ENCODE measurements at regions of chr3 and their contacts with region 1.

Region 1: GRCh38 chr3:181210275-181210674 is 220.7 kb upstream of the DNAJC19 start:
- DNase-seq: peak; percentile 42
- H3K4me3 Mint-ChIP-seq: no peak overlapping the region
- H3K27ac Mint-ChIP-seq: no peak overlapping the region
- H3K4me1 Mint-ChIP-seq: no peaks in the 10 kb centered on the region
- H3K27me3 Mint-ChIP-seq: no peaks in the 10 kb centered on the region
- CTCF ChIP-seq: peak; percentile 55

Region 2: DNA sequence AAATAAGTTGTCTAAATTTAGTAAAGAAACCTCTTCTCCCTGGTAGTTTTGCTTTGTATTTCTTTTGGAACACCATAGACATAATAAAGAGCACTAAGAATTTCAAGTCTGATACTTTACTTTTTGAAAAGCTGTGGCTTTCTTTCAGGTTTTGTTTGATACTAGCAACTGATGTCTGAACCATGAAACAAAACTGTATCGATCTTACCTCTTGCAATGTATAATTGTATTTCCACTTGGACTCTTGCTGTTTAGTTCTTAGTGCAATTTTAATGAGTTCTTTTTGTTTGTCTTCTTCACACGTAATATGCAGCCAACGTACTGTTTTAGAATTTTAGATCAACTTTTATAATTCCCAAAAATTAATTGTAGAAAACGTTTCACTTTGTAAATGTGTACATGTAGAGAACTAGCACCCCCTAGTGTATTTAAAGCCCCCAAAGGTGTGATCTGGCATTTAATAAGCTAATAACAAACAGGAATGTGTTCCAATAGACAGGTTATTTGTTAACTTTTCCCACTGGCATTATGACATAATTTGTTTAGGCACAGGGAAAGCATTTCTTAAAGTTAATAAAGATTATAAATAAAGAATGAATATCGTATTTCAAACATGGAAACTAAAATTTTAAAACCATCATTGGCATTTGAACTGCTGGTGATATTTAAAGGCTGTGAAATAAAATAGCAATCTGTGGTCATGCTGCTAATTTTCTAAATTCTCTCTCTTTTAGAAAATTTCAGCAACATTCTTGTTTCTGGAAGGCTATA is 68.4 kb after region 1 on chr3:
- CTCF ChIA-PET with region 1: interaction called, 6 read pairs
- POLR2A ChIA-PET with region 1: no interaction called
- intact Hi-C with region 1: loop called (anchors 2 kb)
- DNase-seq: peak; percentile 13
- H3K4me3 Mint-ChIP-seq: no peak overlapping the region
- H3K27ac Mint-ChIP-seq: no peak overlapping the region
- H3K4me1 Mint-ChIP-seq: no peaks in the 10 kb centered on the region
- H3K27me3 Mint-ChIP-seq: peaks cover 56% of the 10 kb centered on the region
- CTCF ChIP-seq: no peak

Region 3: DNA sequence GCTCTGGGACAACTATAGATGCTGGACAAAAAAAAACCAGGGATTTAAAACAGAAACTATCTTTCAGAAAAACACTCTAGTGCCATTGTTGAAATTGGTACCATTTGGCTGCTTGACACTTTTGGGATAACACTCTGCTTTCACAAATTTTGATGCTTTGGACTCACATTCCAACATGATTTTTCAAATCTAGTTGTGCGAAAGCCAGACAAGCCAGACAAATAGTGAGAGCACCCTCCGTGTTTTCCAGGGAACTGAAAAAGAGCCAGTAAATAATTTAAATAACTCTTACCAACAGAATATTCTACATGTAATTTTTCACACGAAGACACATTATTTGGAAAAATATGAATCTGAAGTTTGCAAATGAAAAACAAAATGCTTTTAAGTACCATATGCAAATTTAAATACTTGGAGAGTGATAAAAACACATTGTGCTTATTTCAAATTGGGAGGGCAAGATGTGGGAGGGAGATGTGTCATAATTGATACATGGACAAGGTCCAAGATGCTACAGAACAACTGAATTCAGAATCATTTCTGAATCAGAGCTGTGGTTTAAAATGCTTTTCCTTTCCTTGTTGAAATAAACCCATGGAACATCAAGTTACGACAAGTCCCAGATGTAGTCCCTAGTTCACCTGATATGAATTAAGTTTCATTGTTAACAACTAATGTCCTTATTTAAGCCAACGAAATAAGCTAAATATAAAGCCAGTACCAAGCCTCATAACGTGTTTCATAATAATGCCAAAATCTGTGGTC is 357.2 kb after region 1 on chr3:
- CTCF ChIA-PET with region 1: no interaction called
- POLR2A ChIA-PET with region 1: no interaction called
- intact Hi-C with region 1: loop called (anchors 10 kb)
- DNase-seq: peak; percentile 49
- H3K4me3 Mint-ChIP-seq: no peak overlapping the region
- H3K27ac Mint-ChIP-seq: peak overlapping the region; percentile 12
- H3K4me1 Mint-ChIP-seq: peaks cover 15% of the 10 kb centered on the region
- H3K27me3 Mint-ChIP-seq: no peaks in the 10 kb centered on the region
- CTCF ChIP-seq: no peak

Region 4: DNA sequence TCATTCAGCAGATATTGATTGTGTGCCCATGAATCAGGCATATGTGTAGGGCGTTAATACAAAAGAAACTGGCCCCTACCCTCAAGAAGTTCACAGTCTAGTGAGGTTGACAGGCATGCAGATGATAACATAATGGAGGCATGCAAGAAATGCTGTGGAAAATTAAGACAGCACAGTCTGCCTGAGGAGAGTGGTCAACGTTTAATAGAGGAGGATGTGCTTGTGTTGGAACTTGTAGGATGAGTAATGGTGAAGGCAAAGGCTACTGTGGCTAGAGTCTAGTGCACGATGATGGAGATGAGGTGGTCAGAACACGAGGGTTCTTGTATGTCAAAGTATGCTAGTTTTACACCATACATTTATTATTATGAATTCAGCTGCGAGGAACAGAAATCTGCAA is 797.2 kb after region 1 on chr3:
- CTCF ChIA-PET with region 1: no interaction called
- POLR2A ChIA-PET with region 1: no interaction called
- intact Hi-C with region 1: no loop called
- DNase-seq: no peak
- H3K4me3 Mint-ChIP-seq: no peak overlapping the region
- H3K27ac Mint-ChIP-seq: no peak overlapping the region
- H3K4me1 Mint-ChIP-seq: no peaks in the 10 kb centered on the region
- H3K27me3 Mint-ChIP-seq: no peaks in the 10 kb centered on the region
- CTCF ChIP-seq: no peak

Region 5: DNA sequence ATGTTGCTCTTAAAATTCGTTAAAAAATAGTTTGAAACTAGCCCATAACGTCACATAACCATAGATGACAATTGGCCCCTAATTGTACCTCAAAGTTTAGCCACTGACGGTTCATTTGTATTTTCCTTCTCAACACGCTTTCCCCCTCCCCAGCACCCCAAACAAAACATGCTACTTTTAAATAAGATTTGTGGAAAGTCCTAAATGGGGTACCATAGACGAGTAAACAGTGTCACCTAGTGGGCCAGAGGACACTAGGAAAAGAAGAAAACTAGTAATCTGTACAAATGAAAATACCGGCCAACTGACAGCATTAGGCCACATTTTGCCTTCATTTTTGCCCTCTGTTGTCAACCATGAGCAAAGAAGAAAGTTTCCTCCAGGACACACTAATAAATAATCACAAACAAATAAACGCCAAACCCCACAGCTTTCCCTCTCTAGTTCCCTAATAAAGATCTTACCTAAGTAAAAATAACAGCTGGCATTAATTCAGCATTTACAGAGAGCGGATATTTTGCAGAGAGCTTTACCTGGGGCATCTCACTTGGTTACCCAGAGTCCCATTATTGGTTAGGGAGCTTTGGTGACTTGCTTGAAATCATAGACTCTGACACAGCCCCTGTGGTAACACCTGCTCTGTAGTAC is 1407.9 kb after region 1 on chr3:
- CTCF ChIA-PET with region 1: no interaction called
- POLR2A ChIA-PET with region 1: no interaction called
- intact Hi-C with region 1: loop called (anchors 2 kb)
- DNase-seq: peak; percentile 47
- H3K4me3 Mint-ChIP-seq: no peak overlapping the region
- H3K27ac Mint-ChIP-seq: peak overlapping the region; percentile 15
- H3K4me1 Mint-ChIP-seq: peaks cover 30% of the 10 kb centered on the region
- H3K27me3 Mint-ChIP-seq: no peaks in the 10 kb centered on the region
- CTCF ChIP-seq: peak; percentile 51